ENCODE measurements at regions of chr3 and their contacts with region 1.

Region 1: GRCh38 chr3:194682694-194683310 is 2.9 kb upstream of the FAM43A start:
- DNase-seq: peak; percentile 54 to 74
- H3K4me3 ChIP-seq: no peak overlapping the region
- H3K27ac ChIP-seq: no peak overlapping the region
- H3K4me1 ChIP-seq: peaks cover 0 to 10% (median 9%) of the 10 kb centered on the region in 4 experiments; a peak in 6 of 7 replicates
- H3K27me3 ChIP-seq: peaks cover 7 to 36% (median 29%) of the 10 kb centered on the region in 4 experiments
- CTCF ChIP-seq: peak; percentile 52 to 96 (median 95)
- EP300 ChIP-seq: 0 out of 3 replicates have a peak, but pooled peaks of 1 of the 2 experiments have one; percentile 14
- POLR2A ChIP-seq: no peak
- RAD21 ChIP-seq: peak; percentile 95 to 99

Region 2: GRCh38 chr3:194702545-194702944 is 19.7 kb after region 1 on chr3:
- CTCF ChIA-PET with region 1: interaction called, 10 read pairs
- POLR2A ChIA-PET with region 1: interaction called, 15 read pairs
- DNase-seq: no peak
- H3K4me3 ChIP-seq: no peak overlapping the region
- H3K27ac ChIP-seq: no peak overlapping the region
- H3K4me1 ChIP-seq: peaks cover 5 to 10% (median 7%) of the 10 kb centered on the region in 4 experiments
- H3K27me3 ChIP-seq: no peaks in the 10 kb centered on the region
- CTCF ChIP-seq: no peak
- EP300 ChIP-seq: no peak
- POLR2A ChIP-seq: no peak
- RAD21 ChIP-seq: no peak

Region 3: GRCh38 chr3:194801461-194802432 is 118.9 kb after region 1 on chr3:
- CTCF ChIA-PET with region 1: interaction called, 11 read pairs
- POLR2A ChIA-PET with region 1: interaction called, 3 read pairs
- DNase-seq: no peak
- H3K4me3 ChIP-seq: no peak overlapping the region
- H3K27ac ChIP-seq: no peak overlapping the region
- H3K4me1 ChIP-seq: peaks cover 0 to 7% (median 5%) of the 10 kb centered on the region in 4 experiments; a peak in 4 of 7 replicates
- H3K27me3 ChIP-seq: no peaks in the 10 kb centered on the region
- CTCF ChIP-seq: no peak
- EP300 ChIP-seq: no peak
- POLR2A ChIP-seq: no peak
- RAD21 ChIP-seq: no peak

Region 4: GRCh38 chr3:194930377-194931204 is 247.8 kb after region 1 on chr3:
- CTCF ChIA-PET with region 1: interaction called, 44 read pairs
- POLR2A ChIA-PET with region 1: no interaction called
- DNase-seq: peak in 1 of 2 experiments; percentile 6
- H3K4me3 ChIP-seq: no peak overlapping the region
- H3K27ac ChIP-seq: no peak overlapping the region
- H3K4me1 ChIP-seq: peaks cover 0 to 3% (median 1%) of the 10 kb centered on the region in 4 experiments; a peak in 2 of 7 replicates
- H3K27me3 ChIP-seq: no peaks in the 10 kb centered on the region
- CTCF ChIP-seq: no peak
- EP300 ChIP-seq: no peak
- POLR2A ChIP-seq: no peak
- RAD21 ChIP-seq: no peak

Region 5: GRCh38 chr3:194967151-194968117 is 284.6 kb after region 1 on chr3:
- CTCF ChIA-PET with region 1: interaction called, 10 read pairs
- POLR2A ChIA-PET with region 1: no interaction called
- DNase-seq: peak in 1 of 2 experiments; percentile 28
- H3K4me3 ChIP-seq: no peak overlapping the region
- H3K27ac ChIP-seq: no peak overlapping the region
- H3K4me1 ChIP-seq: no peaks in the 10 kb centered on the region
- H3K27me3 ChIP-seq: no peaks in the 10 kb centered on the region
- CTCF ChIP-seq: peak in 1 of 3 experiments; percentile 4; a peak in 2 of 4 replicates
- EP300 ChIP-seq: no peak
- POLR2A ChIP-seq: no peak
- RAD21 ChIP-seq: peak in 1 of 2 experiments; percentile 18; a peak in 1 of 4 replicates

Region 6: GRCh38 chr3:195001961-195002861 is 319.4 kb after region 1 on chr3:
- CTCF ChIA-PET with region 1: interaction called, 17 read pairs
- POLR2A ChIA-PET with region 1: no interaction called
- DNase-seq: peak; percentile 38 to 59
- H3K4me3 ChIP-seq: no peak overlapping the region
- H3K27ac ChIP-seq: no peak overlapping the region
- H3K4me1 ChIP-seq: no peaks in the 10 kb centered on the region; a peak in 3 of 7 replicates
- H3K27me3 ChIP-seq: no peaks in the 10 kb centered on the region
- CTCF ChIP-seq: peak; percentile 71 to 89 (median 80)
- EP300 ChIP-seq: no peak
- POLR2A ChIP-seq: no peak
- RAD21 ChIP-seq: peak; percentile 71 to 79

Region 7: DNA sequence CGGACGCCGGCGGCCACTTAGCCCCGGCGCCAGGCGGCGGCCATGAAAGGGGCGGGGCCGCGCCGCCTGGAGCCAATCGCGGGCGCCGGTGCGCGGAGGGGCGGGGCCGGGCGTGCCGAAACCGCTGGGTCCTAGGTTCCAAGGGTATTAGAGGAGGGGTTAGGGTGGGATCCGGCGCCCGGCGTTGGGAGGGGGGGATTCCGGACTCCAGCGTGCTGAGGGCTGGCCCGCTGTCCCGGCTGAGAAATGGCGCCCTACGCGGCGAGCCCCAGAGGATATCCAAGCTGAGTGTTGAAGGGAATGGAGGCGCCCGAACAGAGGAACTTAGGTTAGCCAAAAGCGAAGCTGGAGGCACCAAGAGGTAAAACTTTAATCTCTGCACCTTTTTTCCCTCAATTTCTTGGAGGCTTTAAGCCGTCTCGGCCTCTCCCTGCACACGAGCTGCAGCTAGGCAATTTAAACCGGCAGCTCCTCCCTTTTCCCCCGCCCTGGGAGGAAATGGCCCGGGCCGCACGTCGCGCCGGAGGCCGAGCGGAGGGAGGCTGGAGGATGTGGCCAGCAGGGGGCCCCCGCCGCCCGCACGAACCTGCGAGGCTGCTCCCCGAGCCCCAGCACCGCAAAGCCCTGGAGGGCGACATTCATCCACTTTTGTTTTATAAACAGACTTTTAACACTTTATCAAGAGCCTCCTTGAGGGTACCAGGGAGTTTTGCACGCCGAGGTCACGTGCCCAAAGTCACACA is 588.5 kb after region 1 on chr3 and contains the start of gene XXYLT1:
- CTCF ChIA-PET with region 1: interaction called, 14 read pairs
- POLR2A ChIA-PET with region 1: interaction called, 4 read pairs
- DNase-seq: peak; percentile 69 to 96
- H3K4me3 ChIP-seq: peak within 1 kb of the TSS; percentile 70 to 86 (median 80)
- H3K27ac ChIP-seq: peak within 1 kb of the TSS; percentile 78; the same call in 1 of the 2 replicates
- H3K4me1 ChIP-seq: peaks cover 0 to 9% (median 7%) of the 10 kb centered on the region in 4 experiments; a peak in 5 of 7 replicates
- H3K27me3 ChIP-seq: no peaks in the 10 kb centered on the region
- CTCF ChIP-seq: peak; percentile 75 to 97 (median 85)
- EP300 ChIP-seq: 0 out of 3 replicates have a peak, but pooled peaks of 1 of the 2 experiments have one; percentile 3
- POLR2A ChIP-seq: peak; percentile 54 to 90
- RAD21 ChIP-seq: peak; percentile 91 to 95
- total RNA-seq, gene XXYLT1: 23.8 and 24.5 TPM in 2 replicates

Measured in H1 (cell line).